CD8-positive, alpha-beta memory T cell (primary cell): ENCODE measurements at regions of chr12 and their contacts with region 1.

Region 1: GRCh38 chr12:122078141-122079032 is at the start of gene MLXIP:
- DNase-seq: peak; percentile 83 to 91 (median 84)
- H3K4me3 ChIP-seq: peak within 1 kb of the TSS; percentile 73
- H3K4me3 Mint-ChIP-seq: peak within 1 kb of the TSS; percentile 87 to 98 (median 96)
- H3K27ac ChIP-seq: peak within 1 kb of the TSS; percentile 84
- H3K27ac Mint-ChIP-seq: peak within 1 kb of the TSS; percentile 87 to 97 (median 91)
- H3K4me1 ChIP-seq: peaks cover 38% of the 10 kb centered on the region
- H3K4me1 Mint-ChIP-seq: peaks cover 40 to 49% (median 43%) of the 10 kb centered on the region in 3 donors
- H3K27me3 ChIP-seq: no peaks in the 10 kb centered on the region
- H3K27me3 Mint-ChIP-seq: peaks cover 0 to 3% of the 10 kb centered on the region in 2 donors
- total RNA-seq, gene MLXIP: 32.1 to 33.9 TPM

Region 2: DNA sequence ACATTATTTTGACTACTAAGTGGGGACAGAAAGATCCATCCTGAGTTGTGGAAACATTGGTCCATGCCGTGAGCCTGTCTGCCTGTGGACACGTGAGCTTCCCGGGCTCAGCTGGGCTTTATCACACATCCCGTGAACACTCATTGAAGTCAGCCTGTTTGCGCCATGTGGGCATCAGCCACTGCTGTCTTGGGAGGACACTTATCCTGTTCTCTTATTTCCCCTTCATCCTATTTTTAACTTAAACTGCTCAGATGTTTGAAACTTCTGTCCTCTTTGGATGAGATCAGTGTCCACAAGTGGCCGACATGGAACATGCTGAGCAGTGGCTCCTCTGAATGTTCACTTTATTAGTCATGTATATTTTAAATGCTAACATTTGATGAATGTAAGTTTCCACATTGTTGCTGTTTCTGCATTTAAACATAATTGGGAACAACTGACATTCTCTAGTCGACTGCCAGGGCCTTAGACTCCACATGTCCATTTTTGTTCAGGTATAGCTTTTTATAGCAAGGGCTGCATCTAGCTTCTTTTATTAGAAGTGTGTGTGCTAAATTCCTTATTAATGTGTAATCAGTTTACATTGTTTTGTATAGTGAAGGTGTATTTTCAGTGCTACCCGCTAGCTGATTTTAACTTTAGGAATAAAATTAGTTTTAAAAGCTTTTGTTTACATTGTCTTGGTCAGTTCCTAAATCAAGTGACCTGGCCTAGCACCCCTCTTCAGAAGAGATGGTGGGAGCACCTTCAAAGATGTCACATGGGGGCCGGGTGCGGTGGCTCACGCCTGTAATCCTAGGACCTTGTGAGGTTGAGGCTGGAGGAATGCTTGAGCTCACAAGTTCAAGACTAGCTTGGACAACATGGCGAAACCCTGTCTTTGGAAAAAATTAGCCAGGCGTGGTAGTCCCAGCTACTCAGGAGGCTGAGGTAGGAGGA is 654.4 kb before region 1 on chr12:
- CTCF ChIA-PET with region 1: no interaction called
- POLR2A ChIA-PET with region 1: interaction called, 12 read pairs
- DNase-seq: no peak
- H3K4me3 ChIP-seq: no peak overlapping the region
- H3K4me3 Mint-ChIP-seq: no peak overlapping the region
- H3K27ac ChIP-seq: peak overlapping the region; percentile 2
- H3K27ac Mint-ChIP-seq: peak overlapping the region in 2 of 8 donors; percentile 12 to 66
- H3K4me1 ChIP-seq: no peaks in the 10 kb centered on the region
- H3K4me1 Mint-ChIP-seq: peaks cover 4 to 13% (median 8%) of the 10 kb centered on the region in 3 donors
- H3K27me3 ChIP-seq: no peaks in the 10 kb centered on the region
- H3K27me3 Mint-ChIP-seq: no peaks in the 10 kb centered on the region

Region 3: GRCh38 chr12:121992059-121992879 is 86.1 kb before region 1 on chr12:
- CTCF ChIA-PET with region 1: no interaction called
- POLR2A ChIA-PET with region 1: no interaction called
- DNase-seq: peak in 1 of 5 donors; percentile 12
- H3K4me3 ChIP-seq: no peak overlapping the region
- H3K4me3 Mint-ChIP-seq: peak overlapping the region in 5 of 7 donors; percentile 26 to 65 (median 44)
- H3K27ac ChIP-seq: no peak overlapping the region
- H3K27ac Mint-ChIP-seq: peak overlapping the region in 4 of 8 donors; percentile 40 to 79 (median 64)
- H3K4me1 ChIP-seq: peaks cover 5% of the 10 kb centered on the region
- H3K4me1 Mint-ChIP-seq: peaks cover 5 to 14% (median 6%) of the 10 kb centered on the region in 3 donors
- H3K27me3 ChIP-seq: no peaks in the 10 kb centered on the region
- H3K27me3 Mint-ChIP-seq: peaks cover 1 to 6% of the 10 kb centered on the region in 2 donors

Region 4: GRCh38 chr12:122023339-122024091 is 54.9 kb before region 1 on chr12:
- CTCF ChIA-PET with region 1: no interaction called
- POLR2A ChIA-PET with region 1: no interaction called
- DNase-seq: peak in 1 of 5 donors; percentile 15
- H3K4me3 ChIP-seq: peak overlapping the region; percentile 37
- H3K4me3 Mint-ChIP-seq: peak overlapping the region; percentile 74 to 89 (median 82)
- H3K27ac ChIP-seq: peak overlapping the region; percentile 31
- H3K27ac Mint-ChIP-seq: peak overlapping the region in 2 of 8 donors; percentile 56 to 64
- H3K4me1 ChIP-seq: peaks cover 15% of the 10 kb centered on the region
- H3K4me1 Mint-ChIP-seq: peaks cover 13 to 24% (median 17%) of the 10 kb centered on the region in 3 donors
- H3K27me3 ChIP-seq: peaks cover 7% of the 10 kb centered on the region
- H3K27me3 Mint-ChIP-seq: peaks cover 13 to 23% of the 10 kb centered on the region in 2 donors

Region 5: GRCh38 chr12:122051231-122051876 is 27.0 kb before region 1 on chr12:
- CTCF ChIA-PET with region 1: interaction called, 24 read pairs
- POLR2A ChIA-PET with region 1: interaction called, 5 read pairs
- DNase-seq: no peak
- H3K4me3 ChIP-seq: no peak overlapping the region
- H3K4me3 Mint-ChIP-seq: no peak overlapping the region
- H3K27ac ChIP-seq: no peak overlapping the region
- H3K27ac Mint-ChIP-seq: no peak overlapping the region
- H3K4me1 ChIP-seq: peaks cover 3% of the 10 kb centered on the region
- H3K4me1 Mint-ChIP-seq: peaks cover 0 to 7% (median 2%) of the 10 kb centered on the region in 3 donors
- H3K27me3 ChIP-seq: no peaks in the 10 kb centered on the region
- H3K27me3 Mint-ChIP-seq: no peaks in the 10 kb centered on the region

Region 6: GRCh38 chr12:122067966-122068365 is 10.4 kb before region 1 on chr12:
- CTCF ChIA-PET with region 1: interaction called, 16 read pairs
- POLR2A ChIA-PET with region 1: interaction called, 9 read pairs
- DNase-seq: peak in 3 of 5 donors; percentile 9 to 59 (median 42)
- H3K4me3 ChIP-seq: peak overlapping the region; percentile 44
- H3K4me3 Mint-ChIP-seq: peak overlapping the region; percentile 8 to 77 (median 63)
- H3K27ac ChIP-seq: no peak overlapping the region
- H3K27ac Mint-ChIP-seq: peak overlapping the region; percentile 31 to 98 (median 80)
- H3K4me1 ChIP-seq: peaks cover 13% of the 10 kb centered on the region
- H3K4me1 Mint-ChIP-seq: peaks cover 10 to 12% (median 12%) of the 10 kb centered on the region in 3 donors
- H3K27me3 ChIP-seq: no peaks in the 10 kb centered on the region
- H3K27me3 Mint-ChIP-seq: no peaks in the 10 kb centered on the region

Region 7: DNA sequence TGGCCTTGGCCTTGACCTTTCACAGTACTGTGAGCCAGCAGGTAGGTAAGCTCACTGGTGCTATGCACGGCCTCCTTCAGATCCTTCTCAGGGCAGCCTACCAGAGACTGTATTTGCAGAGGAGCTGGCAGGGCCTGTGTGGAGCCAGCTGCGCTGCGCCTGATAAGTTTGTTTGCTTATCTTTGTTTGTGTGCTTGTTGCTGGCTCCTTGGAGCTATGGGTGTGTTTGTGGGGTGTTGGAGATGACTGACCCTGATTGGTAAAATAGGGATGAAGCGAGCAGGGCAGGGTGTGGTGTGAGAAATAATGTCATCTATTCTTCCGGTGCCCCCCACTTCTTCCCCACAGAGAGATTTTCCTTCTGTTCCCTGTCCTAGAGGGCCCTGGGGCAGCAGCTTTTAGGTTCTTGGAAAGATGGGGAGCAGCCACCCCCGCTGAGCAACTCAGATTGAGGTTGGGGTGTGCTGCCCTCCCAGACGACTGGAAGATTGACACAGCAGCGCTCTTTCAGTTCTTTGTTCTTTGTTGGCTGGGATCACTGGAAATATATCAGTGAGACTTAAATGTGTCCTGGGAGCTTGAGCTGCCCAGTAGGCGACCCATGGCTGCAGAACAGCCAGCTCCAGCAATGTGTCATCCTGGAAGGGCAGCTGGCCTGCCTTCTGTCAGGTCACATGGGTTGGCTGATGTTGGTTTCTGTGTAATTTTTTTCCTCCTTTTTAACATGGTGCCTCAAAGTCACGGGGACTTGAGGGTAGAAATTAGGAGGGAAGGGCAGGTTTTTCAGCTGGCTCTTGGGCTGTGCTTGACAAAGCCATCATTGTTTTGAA is 19.8 kb after region 1 on chr12:
- CTCF ChIA-PET with region 1: interaction called, 19 read pairs
- POLR2A ChIA-PET with region 1: interaction called, 3 read pairs
- DNase-seq: no peak
- H3K4me3 ChIP-seq: no peak overlapping the region
- H3K4me3 Mint-ChIP-seq: peak overlapping the region in 5 of 7 donors; percentile 33 to 59 (median 47)
- H3K27ac ChIP-seq: peak overlapping the region; percentile 62
- H3K27ac Mint-ChIP-seq: peak overlapping the region; percentile 66 to 89 (median 84)
- H3K4me1 ChIP-seq: peaks cover 68% of the 10 kb centered on the region
- H3K4me1 Mint-ChIP-seq: peaks cover 50 to 68% (median 65%) of the 10 kb centered on the region in 3 donors
- H3K27me3 ChIP-seq: no peaks in the 10 kb centered on the region
- H3K27me3 Mint-ChIP-seq: no peaks in the 10 kb centered on the region